Breast epithelium (tissue), 4 donors: ENCODE measurements at regions of chr14 and their contacts with region 1.

Region 1: DNA sequence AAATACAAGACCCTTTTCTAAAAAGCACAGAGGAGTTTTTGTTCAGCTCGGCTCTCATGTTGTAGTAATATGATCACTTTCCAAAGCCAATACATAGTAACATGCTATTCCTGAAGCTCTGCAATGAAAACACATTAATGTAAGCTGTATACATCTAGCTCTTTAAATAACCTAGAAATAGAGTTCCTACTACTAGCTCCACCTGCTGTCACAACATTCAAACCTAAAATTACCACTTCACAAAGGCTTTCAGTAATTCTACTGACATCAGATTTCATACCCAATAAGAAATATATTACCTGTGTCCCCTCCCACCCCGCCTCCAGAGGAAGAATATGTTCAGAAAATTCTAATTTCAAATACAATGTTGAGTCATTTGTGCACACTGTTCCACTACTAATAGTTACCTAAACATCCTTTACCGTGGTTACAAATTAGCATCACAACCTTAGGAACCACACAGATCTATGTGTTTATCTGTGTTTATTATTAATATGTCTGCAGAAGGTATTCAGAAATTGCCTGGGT is 17.8 kb downstream of the EFCAB11 start:
- DNase-seq: no peak
- H3K4me3 ChIP-seq: no peak overlapping the region
- H3K27ac ChIP-seq: no peak overlapping the region
- H3K4me1 ChIP-seq: no peaks in the 10 kb centered on the region
- H3K27me3 ChIP-seq: no peaks in the 10 kb centered on the region
- CTCF ChIP-seq: no peak
- POLR2A ChIP-seq: no peak

Region 2: GRCh38 chr14:89060191-89060590 is 876.5 kb before region 1 on chr14:
- intact Hi-C with region 1: no loop called
- DNase-seq: no peak
- H3K4me3 ChIP-seq: no peak overlapping the region
- H3K27ac ChIP-seq: no peak overlapping the region
- H3K4me1 ChIP-seq: no peaks in the 10 kb centered on the region
- H3K27me3 ChIP-seq: no peaks in the 10 kb centered on the region
- CTCF ChIP-seq: no peak
- POLR2A ChIP-seq: no peak

Region 3: DNA sequence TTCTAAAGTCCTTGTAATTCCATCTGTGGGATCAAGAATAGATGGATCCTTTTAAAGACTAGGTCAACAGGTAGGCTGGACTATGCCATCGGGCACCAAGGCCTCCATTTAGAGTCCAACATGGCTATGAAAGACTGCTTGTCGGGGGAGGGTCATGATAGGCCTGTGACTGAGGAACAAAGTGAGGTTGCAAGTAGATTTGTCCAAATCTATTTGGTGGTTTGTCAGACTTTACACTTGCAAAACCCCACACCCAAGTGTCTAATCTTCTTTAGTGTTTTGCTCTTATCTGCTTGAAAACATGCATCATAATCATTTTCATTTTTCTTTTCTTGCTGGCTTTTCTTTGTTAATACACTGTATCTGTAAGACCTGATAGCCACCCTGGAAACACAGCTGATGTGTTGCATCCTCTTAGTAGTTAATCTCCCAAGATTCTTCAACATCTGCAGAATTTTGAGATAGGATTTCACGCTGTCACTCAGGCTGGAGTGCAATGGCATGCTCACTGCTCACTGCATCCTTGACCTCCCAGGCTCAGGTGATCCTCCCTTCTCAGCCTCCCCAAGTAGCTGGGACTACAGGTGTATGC is 69.3 kb after region 1 on chr14:
- intact Hi-C with region 1: no loop called
- DNase-seq: no peak
- H3K4me3 ChIP-seq: no peak overlapping the region
- H3K27ac ChIP-seq: no peak overlapping the region
- H3K4me1 ChIP-seq: no peaks in the 10 kb centered on the region
- H3K27me3 ChIP-seq: no peaks in the 10 kb centered on the region
- CTCF ChIP-seq: no peak
- POLR2A ChIP-seq: no peak

Region 4: DNA sequence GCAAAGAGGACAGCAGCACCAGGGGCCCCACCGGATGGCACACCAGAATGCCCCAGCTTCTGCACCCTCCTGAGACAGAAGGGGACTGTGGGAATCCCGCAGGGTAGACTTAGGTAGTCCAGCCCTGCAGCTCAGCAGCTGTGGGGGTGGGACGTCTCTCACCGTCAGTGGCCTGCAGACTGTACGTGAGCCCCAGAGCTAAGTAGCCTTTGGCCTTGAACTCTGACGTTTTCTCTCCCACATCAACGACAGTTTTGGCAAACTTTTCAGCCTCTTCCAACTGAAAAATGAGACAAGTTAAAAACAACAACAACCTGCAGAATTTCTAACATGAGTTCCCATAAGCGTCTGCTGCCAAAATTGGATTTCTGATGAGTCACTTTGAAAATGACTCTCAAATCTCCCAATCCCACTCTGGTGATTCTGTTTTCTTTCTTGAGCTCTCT is 718.1 kb after region 1 on chr14:
- intact Hi-C with region 1: loop called (anchors 5 kb)
- DNase-seq: no peak
- H3K4me3 ChIP-seq: no peak overlapping the region
- H3K27ac ChIP-seq: no peak overlapping the region
- H3K4me1 ChIP-seq: no peaks in the 10 kb centered on the region
- H3K27me3 ChIP-seq: no peaks in the 10 kb centered on the region
- CTCF ChIP-seq: no peak
- POLR2A ChIP-seq: no peak